ENCODE measurements at regions of chr11 and their contacts with region 1.

Region 1: DNA sequence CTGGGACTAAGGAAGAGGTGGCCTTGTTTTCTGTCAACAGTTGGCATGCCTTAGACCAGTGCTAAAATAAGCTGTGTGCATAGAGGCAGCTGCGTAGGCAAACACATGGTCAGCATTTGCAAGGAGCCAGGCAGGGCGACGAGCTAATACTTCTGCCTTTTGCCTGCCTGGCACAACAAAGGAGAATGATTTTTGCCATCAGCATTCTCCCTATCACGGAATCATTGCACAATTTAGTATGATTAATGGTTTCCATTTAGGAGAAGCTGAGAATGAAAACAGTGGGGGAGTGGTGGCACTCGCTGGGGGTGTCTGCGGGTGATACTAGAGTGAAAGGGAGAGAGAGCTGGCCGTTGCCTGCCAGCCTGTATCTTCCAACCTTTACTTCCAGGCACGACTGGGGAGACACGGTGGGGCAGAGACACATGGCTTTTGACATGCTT is 336.0 kb downstream of the CADM1 start:
- DNase-seq: peak; percentile 23 to 71
- ATAC-seq: peak; percentile 93 to 98 (median 96)
- H3K4me3 ChIP-seq: peak overlapping the region; percentile 39
- H3K27ac ChIP-seq: peak overlapping the region; percentile 86
- H3K4me1 ChIP-seq: peaks cover 18% of the 10 kb centered on the region
- H3K27me3 ChIP-seq: no peaks in the 10 kb centered on the region
- CTCF ChIP-seq: no peak

Region 2: DNA sequence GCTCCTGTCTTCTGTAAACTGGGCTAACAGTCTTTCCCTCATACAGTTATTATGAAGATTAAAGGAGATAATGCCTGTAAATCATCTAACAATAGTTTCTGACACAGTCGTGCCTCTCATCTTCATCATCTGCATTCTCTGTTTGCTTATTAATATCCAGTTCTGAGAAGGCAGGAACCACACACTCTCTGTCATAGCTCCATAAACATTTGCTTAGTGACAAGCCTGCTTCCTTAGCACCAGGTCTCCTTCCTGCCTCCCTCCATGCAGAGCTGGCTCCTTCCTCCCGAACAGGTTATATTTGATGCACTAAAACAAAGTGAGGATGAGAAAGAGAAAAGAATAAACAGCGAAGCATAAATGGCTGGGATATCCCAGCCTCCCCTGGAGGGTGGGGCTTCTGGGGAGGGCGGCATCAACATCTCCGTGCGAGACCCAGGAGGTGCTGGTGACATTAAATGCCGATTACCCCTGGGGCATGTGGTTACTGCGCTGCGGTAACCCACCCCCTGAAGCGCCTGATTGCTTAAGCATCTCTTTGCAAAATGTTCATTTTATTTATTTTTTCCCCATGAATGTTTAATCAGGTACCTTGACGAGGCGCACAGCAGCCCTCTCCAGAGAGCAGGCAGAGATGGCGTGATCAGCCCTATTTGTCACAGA is 85.0 kb before region 1 on chr11:
- intact Hi-C with region 1: loop called in 1 of 2 experiments (anchors 5 kb)
- DNase-seq: no peak
- ATAC-seq: peak in 3 of 4 donors; percentile 27 to 56 (median 30)
- H3K4me3 ChIP-seq: no peak overlapping the region
- H3K27ac ChIP-seq: no peak overlapping the region
- H3K4me1 ChIP-seq: peaks cover 9% of the 10 kb centered on the region
- H3K27me3 ChIP-seq: no peaks in the 10 kb centered on the region
- CTCF ChIP-seq: no peak

Region 3: GRCh38 chr11:115222218-115222862 is 54.1 kb after region 1 on chr11:
- intact Hi-C with region 1: loop called in 1 of 2 experiments (anchors 2 kb)
- DNase-seq: no peak
- ATAC-seq: peak; percentile 44 to 85 (median 68)
- H3K4me3 ChIP-seq: no peak overlapping the region
- H3K27ac ChIP-seq: peak overlapping the region; percentile 88
- H3K4me1 ChIP-seq: peaks cover 33% of the 10 kb centered on the region
- H3K27me3 ChIP-seq: no peaks in the 10 kb centered on the region
- CTCF ChIP-seq: no peak

Region 4: GRCh38 chr11:115269191-115269950 is 101.1 kb after region 1 on chr11:
- intact Hi-C with region 1: no loop called
- DNase-seq: no peak
- ATAC-seq: no peak
- H3K4me3 ChIP-seq: no peak overlapping the region
- H3K27ac ChIP-seq: no peak overlapping the region
- H3K4me1 ChIP-seq: peaks cover 12% of the 10 kb centered on the region
- H3K27me3 ChIP-seq: no peaks in the 10 kb centered on the region
- CTCF ChIP-seq: no peak

Measured in psoas muscle (tissue), 8 donors.